ENCODE measurements at regions of chr18 and their contacts with region 1.

Region 1: DNA sequence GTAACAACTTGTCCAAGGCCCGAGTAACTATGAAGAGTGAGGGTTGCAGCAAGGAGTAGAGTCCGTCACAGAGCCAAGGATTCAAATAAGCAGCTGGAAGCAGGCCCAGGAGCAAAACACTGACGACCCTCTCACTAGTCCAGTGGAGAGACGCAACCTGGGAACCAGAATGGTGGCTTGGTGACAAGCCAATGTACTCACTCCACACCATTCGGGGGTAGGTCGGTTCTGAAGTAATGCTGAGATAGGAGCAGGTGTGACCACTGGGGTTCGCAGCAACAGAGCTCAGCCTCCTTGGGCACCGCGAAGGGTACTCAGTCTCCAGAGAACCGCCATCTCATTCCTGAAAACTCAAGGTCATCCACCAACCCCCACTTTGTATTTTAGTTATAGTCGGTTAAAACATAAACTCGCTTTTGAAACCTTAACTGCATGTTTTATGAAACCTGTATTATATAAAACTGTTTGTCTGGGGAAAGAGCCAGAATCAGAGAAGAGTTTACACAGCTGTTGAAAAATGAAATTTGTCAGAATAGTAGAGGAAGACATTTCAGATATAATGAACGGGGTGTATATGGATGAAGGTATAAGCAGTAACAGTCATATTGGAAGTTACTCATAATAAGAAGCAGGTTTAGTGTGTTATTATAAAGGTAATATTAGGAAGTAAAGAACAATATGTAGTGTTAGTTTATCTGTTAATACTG is 8.6 kb downstream of the ANKRD62 start:
- DNase-seq: no peak
- H3K4me3 ChIP-seq: no peak overlapping the region
- CTCF ChIP-seq: no peak
- POLR2A ChIP-seq: no peak

Region 2: GRCh38 chr18:10822456-10822855 is 1279.8 kb before region 1 on chr18:
- intact Hi-C with region 1: loop called (anchors 5 kb)
- DNase-seq: no peak
- H3K4me3 ChIP-seq: no peak overlapping the region
- CTCF ChIP-seq: no peak
- POLR2A ChIP-seq: no peak

Measured in lower leg skin (tissue), 4 donors.